Naive thymus-derived CD4-positive, alpha-beta T cell (primary cell): ENCODE measurements at regions of chr10 and their contacts with region 1.

Region 1: DNA sequence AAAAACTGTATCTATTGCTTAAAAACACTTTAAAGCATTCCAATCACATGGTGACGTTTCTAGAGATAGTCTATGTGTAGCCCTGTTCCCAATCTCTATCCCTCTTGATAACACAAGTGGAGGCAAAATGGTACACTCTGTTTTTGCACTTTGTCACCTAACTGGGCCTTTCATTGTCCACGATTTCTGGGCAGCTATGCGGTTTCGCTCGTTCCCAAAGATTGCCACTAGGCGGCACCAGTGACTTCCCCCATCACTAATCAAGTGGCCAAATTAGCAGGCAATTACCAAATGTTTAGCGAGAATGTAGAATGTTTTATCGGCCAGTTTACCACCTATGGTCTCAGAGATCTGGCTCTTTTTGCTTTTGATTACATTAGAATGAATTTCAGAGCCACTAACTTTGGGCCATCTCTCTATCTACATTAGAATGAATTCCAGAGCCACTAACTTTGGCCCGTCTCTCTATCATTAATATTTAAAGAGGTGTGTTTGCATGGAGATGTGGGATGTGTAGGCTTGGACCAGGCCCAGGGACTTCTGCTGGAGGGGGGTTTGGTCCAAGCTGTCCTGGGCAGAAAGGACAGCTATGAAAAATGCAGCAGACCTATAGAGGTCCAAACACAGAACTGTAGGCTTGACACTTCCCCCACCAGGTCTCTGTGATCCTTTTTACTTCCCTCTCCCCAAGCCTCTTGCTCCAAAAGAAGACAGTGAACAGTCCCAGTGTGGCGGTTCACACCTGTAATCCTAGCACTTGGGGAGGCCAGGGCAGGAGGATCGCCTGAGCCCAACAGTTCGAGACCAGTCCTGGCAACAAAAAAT is 90.1 kb downstream of the EPC1 start:
- DNase-seq: peak; percentile 31 to 67 (median 57)
- ATAC-seq: peak; percentile 89
- H3K4me3 ChIP-seq: no peak overlapping the region
- H3K4me3 Mint-ChIP-seq: peak overlapping the region in 1 of 10 donors; percentile 60
- H3K27ac ChIP-seq: no peak overlapping the region
- H3K27ac Mint-ChIP-seq: peak overlapping the region in 1 of 9 donors; percentile 51
- H3K4me1 ChIP-seq: peaks cover 0 to 5% of the 10 kb centered on the region in 2 donors
- H3K4me1 Mint-ChIP-seq: peaks cover 1 to 13% (median 5%) of the 10 kb centered on the region in 7 donors
- H3K27me3 ChIP-seq: no peaks in the 10 kb centered on the region
- H3K27me3 Mint-ChIP-seq: no peaks in the 10 kb centered on the region

Region 2: GRCh38 chr10:32530231-32530630 is 273.4 kb after region 1 on chr10:
- CTCF ChIA-PET with region 1: no interaction called
- POLR2A ChIA-PET with region 1: no interaction called
- intact Hi-C with region 1: no loop called
- DNase-seq: no peak
- ATAC-seq: no peak
- H3K4me3 ChIP-seq: no peak overlapping the region
- H3K4me3 Mint-ChIP-seq: no peak overlapping the region
- H3K27ac ChIP-seq: no peak overlapping the region
- H3K27ac Mint-ChIP-seq: peak overlapping the region in 1 of 9 donors; percentile 1
- H3K4me1 ChIP-seq: no peaks in the 10 kb centered on the region
- H3K4me1 Mint-ChIP-seq: peaks cover 0 to 14% (median 0%) of the 10 kb centered on the region in 7 donors
- H3K27me3 ChIP-seq: no peaks in the 10 kb centered on the region
- H3K27me3 Mint-ChIP-seq: no peaks in the 10 kb centered on the region

Region 3: GRCh38 chr10:32980558-32981468 is 724.0 kb after region 1 on chr10:
- CTCF ChIA-PET with region 1: no interaction called
- POLR2A ChIA-PET with region 1: no interaction called
- intact Hi-C with region 1: loop called in 1 of 2 experiments (anchors 10 kb)
- DNase-seq: peak; percentile 54 to 84 (median 66)
- ATAC-seq: peak; percentile 95
- H3K4me3 ChIP-seq: peak overlapping the region; percentile 64
- H3K4me3 Mint-ChIP-seq: peak overlapping the region; percentile 90 to 99 (median 95)
- H3K27ac ChIP-seq: peak overlapping the region; percentile 56
- H3K27ac Mint-ChIP-seq: peak overlapping the region; percentile 82 to 99 (median 93)
- H3K4me1 ChIP-seq: peaks cover 11 to 32% of the 10 kb centered on the region in 2 donors
- H3K4me1 Mint-ChIP-seq: peaks cover 15 to 33% (median 24%) of the 10 kb centered on the region in 7 donors
- H3K27me3 ChIP-seq: no peaks in the 10 kb centered on the region
- H3K27me3 Mint-ChIP-seq: peaks cover 0 to 5% (median 0%) of the 10 kb centered on the region in 5 donors